Heart right ventricle (tissue), 16 donors: ENCODE measurements at regions of chr5 and their contacts with region 1.

Region 1: GRCh38 chr5:140632150-140633020 is 590 bp downstream of the CD14 start:
- DNase-seq: peak; percentile 50 to 56
- ATAC-seq: peak; percentile 62 to 85 (median 77)
- H3K4me3 ChIP-seq: peak overlapping the region; percentile 10 to 69 (median 62)
- H3K27ac ChIP-seq: peak overlapping the region in 9 of 10 donors; percentile 14 to 92 (median 74)
- H3K4me1 ChIP-seq: peaks cover 0 to 39% (median 19%) of the 10 kb centered on the region in 9 donors
- H3K27me3 ChIP-seq: no peaks in the 10 kb centered on the region
- CTCF ChIP-seq: no peak

Region 2: DNA sequence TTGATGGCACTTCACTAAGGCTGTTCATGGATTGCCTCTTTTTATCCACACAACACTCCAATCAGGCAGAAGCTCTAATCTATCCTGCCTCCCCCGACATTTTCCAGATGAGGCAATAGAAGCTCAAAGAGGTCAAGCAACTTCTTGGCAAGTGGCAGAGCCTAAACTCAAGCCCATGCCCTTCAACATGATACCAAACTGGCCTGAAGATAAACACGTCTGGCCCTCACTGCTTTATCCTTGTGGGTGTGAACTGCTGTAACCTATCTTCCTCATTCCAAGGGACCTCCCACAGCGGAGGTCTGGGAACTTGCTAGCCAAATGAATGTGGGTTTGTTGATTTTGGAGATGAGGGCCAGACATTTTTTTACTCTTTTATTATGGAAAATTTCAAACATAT is 58.2 kb before region 1 on chr5:
- intact Hi-C with region 1: loop called in 7 of 10 experiments (anchors 5 to 10 kb)
- DNase-seq: peak in 1 of 2 donors; percentile 36
- ATAC-seq: peak in 7 of 8 donors; percentile 20 to 74 (median 41)
- H3K4me3 ChIP-seq: no peak overlapping the region
- H3K27ac ChIP-seq: peak overlapping the region in 5 of 10 donors; percentile 3 to 53 (median 47)
- H3K4me1 ChIP-seq: peaks cover 0 to 63% (median 28%) of the 10 kb centered on the region in 9 donors
- H3K27me3 ChIP-seq: no peaks in the 10 kb centered on the region
- CTCF ChIP-seq: no peak